ENCODE measurements at regions of chr22 and their contacts with region 1.

Region 1: DNA sequence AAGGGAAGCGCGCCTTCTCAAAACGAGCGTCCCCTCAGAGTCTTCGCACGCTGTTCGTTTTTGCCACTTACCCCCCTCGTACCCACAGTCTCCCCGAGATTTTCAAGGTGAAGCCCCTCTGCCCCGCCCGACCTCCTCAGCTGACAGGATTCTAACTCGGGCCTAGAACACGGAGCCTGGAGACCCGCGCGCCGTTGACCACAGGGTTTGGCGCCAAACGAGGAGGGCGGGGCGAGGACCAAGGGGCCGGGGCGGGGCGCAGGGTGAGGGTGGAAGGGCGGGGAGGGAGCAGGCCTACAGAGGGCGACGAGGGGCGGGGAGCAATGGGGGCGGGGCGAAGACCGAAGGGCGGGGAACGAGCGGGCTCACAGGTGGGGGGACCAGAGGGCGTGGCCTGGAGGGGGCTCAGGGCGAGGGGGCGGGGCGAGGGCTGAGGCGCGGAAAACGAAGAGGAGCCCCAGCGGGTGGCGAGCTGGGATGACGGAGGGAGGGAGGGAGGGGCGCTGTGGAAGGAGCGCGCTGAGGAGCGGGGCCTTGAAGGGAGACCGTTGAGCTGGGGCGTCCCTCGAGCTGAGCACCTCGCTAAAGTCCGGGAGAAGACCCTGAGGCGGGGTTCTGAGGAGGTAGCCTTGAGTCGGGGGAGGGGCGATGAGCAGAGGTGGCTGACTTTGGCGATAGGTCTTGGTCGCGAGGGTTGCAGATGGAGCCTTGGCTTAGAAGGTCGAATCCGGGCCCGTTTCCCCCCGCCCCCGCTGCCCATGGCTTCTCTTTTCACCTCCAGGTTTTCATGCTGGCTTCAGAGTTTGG is at the start of gene DMC1:
- DNase-seq: peak; percentile 99
- H3K4me3 Mint-ChIP-seq: peak within 1 kb of the TSS; percentile 81
- H3K27ac Mint-ChIP-seq: peak within 1 kb of the TSS; percentile 95
- H3K4me1 Mint-ChIP-seq: peaks cover 11% of the 10 kb centered on the region
- H3K27me3 Mint-ChIP-seq: no peaks in the 10 kb centered on the region
- total RNA-seq, gene DMC1: 13.0 to 16.3 TPM

Region 2: DNA sequence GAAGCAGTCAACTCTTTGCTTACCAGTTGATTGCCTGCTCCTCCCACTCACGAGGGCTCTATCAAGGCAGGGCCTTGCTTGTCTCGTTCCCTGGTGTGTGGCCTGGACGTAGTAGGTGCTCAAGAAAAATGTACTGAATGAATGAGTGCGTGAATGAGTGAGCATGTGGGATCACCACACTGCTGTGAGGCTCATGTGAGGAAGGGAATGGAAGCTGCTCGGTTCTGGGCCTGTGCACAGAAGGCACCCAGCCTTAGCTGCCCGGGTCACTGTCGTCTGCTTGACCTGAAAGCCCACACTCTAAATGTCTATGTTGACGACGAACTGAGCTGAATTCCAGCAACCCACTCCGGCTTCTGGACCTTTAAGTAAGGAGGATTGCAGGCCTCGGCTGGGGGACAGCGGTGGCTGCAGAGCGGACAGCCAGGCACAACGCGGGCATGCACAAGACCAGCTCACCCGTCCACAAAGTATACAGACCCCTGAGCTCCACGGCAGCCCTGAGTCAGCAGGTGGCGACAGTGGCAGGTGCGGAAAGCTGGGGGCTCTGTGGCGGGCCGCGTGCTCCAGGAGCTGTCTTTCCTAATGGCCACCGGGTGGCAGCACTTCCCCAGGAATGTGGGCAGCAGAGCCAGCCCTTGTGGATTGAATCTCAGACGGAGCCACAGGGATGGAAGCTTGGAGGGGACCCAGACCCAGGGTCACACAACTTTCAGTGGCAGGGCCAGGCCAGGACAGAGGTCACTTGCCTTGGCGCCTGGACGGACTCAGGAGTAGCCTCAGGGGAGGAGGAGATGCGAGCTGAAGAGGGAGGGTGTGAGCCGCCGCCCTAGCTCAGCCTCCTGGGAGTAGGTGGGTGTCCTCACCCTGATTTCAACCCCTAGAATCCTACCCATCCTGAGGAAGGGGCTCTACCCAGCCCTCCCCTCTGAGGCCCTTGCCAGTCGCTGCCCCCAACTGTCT is 518.0 kb before region 1 on chr22:
- CTCF ChIA-PET with region 1: interaction called, 11 read pairs
- intact Hi-C with region 1: loop called (anchors 1 kb)
- DNase-seq: peak; percentile 83
- H3K4me3 Mint-ChIP-seq: no peak overlapping the region
- H3K27ac Mint-ChIP-seq: no peak overlapping the region
- H3K4me1 Mint-ChIP-seq: peaks cover 7% of the 10 kb centered on the region
- H3K27me3 Mint-ChIP-seq: no peaks in the 10 kb centered on the region

Region 3: GRCh38 chr22:38317122-38317994 is 252.8 kb before region 1 on chr22 and contains the start of gene CSNK1E:
- CTCF ChIA-PET with region 1: no interaction called
- intact Hi-C with region 1: loop called (anchors 1 kb)
- DNase-seq: peak; percentile 73
- H3K4me3 Mint-ChIP-seq: peak within 1 kb of the TSS; percentile 90
- H3K27ac Mint-ChIP-seq: peak within 1 kb of the TSS; percentile 86
- H3K4me1 Mint-ChIP-seq: peaks cover 41% of the 10 kb centered on the region
- H3K27me3 Mint-ChIP-seq: no peaks in the 10 kb centered on the region
- total RNA-seq, gene CSNK1E: 105 to 108 TPM

Region 4: DNA sequence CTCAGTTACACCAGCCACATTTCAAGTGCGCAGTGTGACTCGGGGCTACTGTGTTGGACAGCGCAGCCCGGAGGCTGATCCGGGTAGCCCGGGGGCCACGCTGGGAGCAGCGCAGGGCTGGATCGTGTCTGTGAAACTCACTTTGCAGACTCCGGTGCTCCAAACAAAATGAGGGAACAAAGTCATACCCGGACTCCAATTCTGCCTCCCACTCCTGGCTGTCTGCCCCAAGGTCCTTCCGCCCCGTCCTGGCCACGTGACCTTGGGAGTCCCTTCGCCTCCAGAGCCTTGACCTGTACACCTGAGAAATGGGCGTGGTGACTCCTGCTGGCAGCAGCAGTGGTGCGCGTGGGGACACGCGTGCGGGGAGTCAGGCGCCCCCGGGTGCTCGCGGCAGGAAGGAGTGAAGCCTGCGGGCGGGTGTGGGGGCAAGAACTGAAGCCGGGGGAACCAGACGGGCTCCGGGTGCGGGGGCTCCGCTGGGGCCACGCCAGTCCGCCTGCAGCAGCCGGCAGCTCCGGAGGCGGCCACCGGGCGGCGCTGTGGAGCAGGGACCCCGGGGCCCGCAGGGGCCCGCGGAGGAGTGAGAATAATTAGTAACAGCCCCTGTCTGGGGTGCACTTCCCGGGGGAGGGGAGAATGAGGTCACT is 157.6 kb before region 1 on chr22:
- CTCF ChIA-PET with region 1: interaction called, 17 read pairs
- intact Hi-C with region 1: loop called (anchors 1 kb)
- DNase-seq: peak; percentile 45
- H3K4me3 Mint-ChIP-seq: no peak overlapping the region
- H3K27ac Mint-ChIP-seq: no peak overlapping the region
- H3K4me1 Mint-ChIP-seq: peaks cover 4% of the 10 kb centered on the region
- H3K27me3 Mint-ChIP-seq: peaks cover 2% of the 10 kb centered on the region

Region 5: GRCh38 chr22:38506118-38506962 is 63.8 kb before region 1 on chr22 and contains the start of gene DDX17:
- CTCF ChIA-PET with region 1: interaction called, 11 read pairs
- intact Hi-C with region 1: loop called (anchors 1 kb)
- DNase-seq: peak; percentile 97
- H3K4me3 Mint-ChIP-seq: peak within 1 kb of the TSS; percentile 98
- H3K27ac Mint-ChIP-seq: peak within 1 kb of the TSS; percentile 100
- H3K4me1 Mint-ChIP-seq: peaks cover 36% of the 10 kb centered on the region
- H3K27me3 Mint-ChIP-seq: no peaks in the 10 kb centered on the region
- total RNA-seq, gene DDX17: 319 to 341 TPM

Region 6: GRCh38 chr22:38656256-38657044 is 86.3 kb after region 1 on chr22 and contains the starts of genes CBY1 and FAM227A:
- CTCF ChIA-PET with region 1: no interaction called
- intact Hi-C with region 1: loop called (anchors 2 kb)
- DNase-seq: peak; percentile 86
- H3K4me3 Mint-ChIP-seq: peak within 1 kb of the TSS; percentile 87
- H3K27ac Mint-ChIP-seq: peak within 1 kb of the TSS; percentile 95
- H3K4me1 Mint-ChIP-seq: peaks cover 14% of the 10 kb centered on the region
- H3K27me3 Mint-ChIP-seq: no peaks in the 10 kb centered on the region
- total RNA-seq, gene CBY1: 8.8 to 9.4 TPM
- total RNA-seq, gene FAM227A: 0.35 to 0.36 TPM

Region 7: GRCh38 chr22:38755911-38756532 is 185.8 kb after region 1 on chr22 and contains the start of gene SUN2:
- CTCF ChIA-PET with region 1: no interaction called
- intact Hi-C with region 1: no loop called
- DNase-seq: peak; percentile 94
- H3K4me3 Mint-ChIP-seq: peak within 1 kb of the TSS; percentile 92
- H3K27ac Mint-ChIP-seq: peak within 1 kb of the TSS; percentile 92
- H3K4me1 Mint-ChIP-seq: peaks cover 52% of the 10 kb centered on the region
- H3K27me3 Mint-ChIP-seq: no peaks in the 10 kb centered on the region
- total RNA-seq, gene SUN2: 120 to 121 TPM